ENCODE measurements at regions of chr3 and their contacts with region 1.

Region 1: GRCh38 chr3:18669374-18669773 is 244.2 kb upstream of the SATB1 start:
- DNase-seq: no peak
- H3K4me3 Mint-ChIP-seq: no peak overlapping the region
- H3K27ac Mint-ChIP-seq: peak overlapping the region; percentile 73
- H3K4me1 Mint-ChIP-seq: peaks cover 67% of the 10 kb centered on the region
- H3K27me3 Mint-ChIP-seq: no peaks in the 10 kb centered on the region

Region 2: GRCh38 chr3:18562364-18563154 is 106.8 kb before region 1 on chr3:
- intact Hi-C with region 1: no loop called
- DNase-seq: no peak
- H3K4me3 Mint-ChIP-seq: no peak overlapping the region
- H3K27ac Mint-ChIP-seq: no peak overlapping the region
- H3K4me1 Mint-ChIP-seq: peaks cover 70% of the 10 kb centered on the region
- H3K27me3 Mint-ChIP-seq: no peaks in the 10 kb centered on the region

Region 3: DNA sequence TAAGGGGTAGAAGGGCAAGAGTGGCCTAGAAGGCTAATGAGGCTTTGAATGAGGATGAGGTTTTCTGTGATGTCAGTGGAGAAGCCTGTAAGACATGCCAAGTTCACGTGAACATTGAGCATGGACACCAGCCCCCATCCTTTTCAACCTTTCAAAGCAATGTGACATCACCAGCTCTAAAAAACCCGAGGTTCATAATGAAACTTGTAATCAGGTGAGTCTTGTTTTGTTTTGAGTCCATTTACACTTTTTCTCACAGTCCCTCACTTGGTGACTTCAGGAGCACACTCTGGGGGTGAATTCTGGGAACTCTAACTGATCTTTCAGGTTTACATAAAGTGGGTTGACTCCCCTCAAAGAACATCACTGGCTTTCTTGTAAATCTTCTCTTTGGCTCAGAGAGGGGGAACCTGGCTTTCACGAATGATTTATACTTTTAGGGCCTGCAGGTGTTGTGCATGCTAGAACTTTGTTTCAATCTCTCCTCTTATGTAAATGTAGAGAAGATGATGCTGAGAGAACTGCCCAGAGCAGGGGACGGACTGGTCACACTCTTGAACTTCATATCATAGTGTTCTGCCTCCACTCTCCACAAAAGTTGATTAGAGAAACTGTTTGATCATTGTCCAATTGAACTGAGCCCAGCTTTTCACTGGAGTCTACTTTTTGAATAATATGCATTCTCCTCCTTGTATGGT is 19.6 kb before region 1 on chr3:
- intact Hi-C with region 1: loop called (anchors 1 kb)
- DNase-seq: peak; percentile 49
- H3K4me3 Mint-ChIP-seq: peak overlapping the region; percentile 14
- H3K27ac Mint-ChIP-seq: peak overlapping the region; percentile 93
- H3K4me1 Mint-ChIP-seq: peaks cover 84% of the 10 kb centered on the region
- H3K27me3 Mint-ChIP-seq: no peaks in the 10 kb centered on the region

Region 4: GRCh38 chr3:18657858-18658820 is 11.2 kb before region 1 on chr3:
- intact Hi-C with region 1: loop called (anchors 1 kb)
- DNase-seq: no peak
- H3K4me3 Mint-ChIP-seq: peak overlapping the region; percentile 15
- H3K27ac Mint-ChIP-seq: peak overlapping the region; percentile 71
- H3K4me1 Mint-ChIP-seq: peaks cover 70% of the 10 kb centered on the region
- H3K27me3 Mint-ChIP-seq: no peaks in the 10 kb centered on the region

Region 5: GRCh38 chr3:18712713-18713576 is 43.6 kb after region 1 on chr3:
- intact Hi-C with region 1: no loop called
- DNase-seq: peak; percentile 31
- H3K4me3 Mint-ChIP-seq: peak overlapping the region; percentile 65
- H3K27ac Mint-ChIP-seq: peak overlapping the region; percentile 99
- H3K4me1 Mint-ChIP-seq: peaks cover 65% of the 10 kb centered on the region
- H3K27me3 Mint-ChIP-seq: no peaks in the 10 kb centered on the region

Measured in activated T-helper 2 cell treated with anti-CD3 and anti-CD28 coated beads, Interferon-gamma antibody, Interleukin-2, Interleukin-4, amounts not matched to agents 10 μg/mL and 5 μg/mL and 100 μg/mL, durations not matched to agents 14 hours and 24 hours and 36 hours (primary cell).